Naive thymus-derived CD8-positive, alpha-beta T cell (primary cell): ENCODE measurements at regions of chr1 and their contacts with region 1.

Region 1: GRCh38 chr1:235128456-235129328 is at the start of gene TOMM20:
- DNase-seq: peak; percentile 90 to 97 (median 94)
- ATAC-seq: peak; percentile 89 to 91
- H3K4me3 Mint-ChIP-seq: peak within 1 kb of the TSS; percentile 86 to 98 (median 96)
- H3K27ac Mint-ChIP-seq: peak within 1 kb of the TSS; percentile 95 to 99 (median 98)
- H3K4me1 Mint-ChIP-seq: peaks cover 13 to 48% (median 44%) of the 10 kb centered on the region in 4 donors
- H3K27me3 Mint-ChIP-seq: no peaks in the 10 kb centered on the region
- polyA plus RNA-seq, gene TOMM20: 56.6 to 67.0 (median 60.7) TPM

Region 2: DNA sequence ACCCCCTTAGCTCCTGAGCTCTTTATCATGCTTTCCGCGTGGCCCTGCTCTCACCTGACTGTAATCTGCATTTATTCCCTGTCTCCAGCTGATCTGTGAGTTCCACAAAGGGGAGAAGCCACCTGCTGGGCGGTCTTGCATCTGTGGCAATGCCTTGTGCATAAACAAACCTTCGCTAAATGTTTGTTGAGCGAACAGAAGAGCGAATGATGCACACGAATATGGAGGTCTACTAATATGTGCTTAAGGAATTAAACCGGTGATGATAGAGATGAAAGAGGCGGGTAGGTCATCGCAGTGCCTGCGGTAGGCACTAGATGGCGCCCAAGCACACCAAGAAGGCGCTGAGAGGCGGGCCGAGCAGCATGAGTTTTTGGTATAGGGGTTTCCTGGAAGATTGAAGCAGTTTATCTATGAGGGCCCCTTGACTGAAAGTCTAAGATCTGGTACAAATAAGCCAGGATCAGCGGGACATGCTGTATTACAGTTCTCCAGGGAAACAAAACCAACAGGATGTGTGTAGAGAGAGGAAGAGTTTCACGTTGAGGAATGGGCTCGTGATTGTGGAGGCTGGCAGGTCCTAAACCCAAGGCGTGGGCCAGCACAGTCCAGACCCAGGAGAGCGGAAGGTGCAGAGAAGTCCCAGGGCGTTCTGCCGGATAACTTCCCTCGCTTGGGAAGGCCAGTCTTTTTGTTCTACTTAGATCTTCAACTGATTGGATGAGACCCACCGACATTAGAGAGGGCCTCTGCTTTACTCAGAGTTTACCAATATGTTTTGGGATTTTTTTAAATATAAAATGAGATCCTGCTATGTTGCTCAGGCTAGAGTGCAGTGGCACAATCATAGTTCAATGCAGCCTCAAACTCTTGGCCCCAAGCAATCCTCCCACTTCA is 34.7 kb before region 1 on chr1:
- POLR2A ChIA-PET with region 1: no interaction called
- DNase-seq: peak; percentile 66 to 86 (median 82)
- ATAC-seq: peak; percentile 98 to 99
- H3K4me3 Mint-ChIP-seq: no peak overlapping the region
- H3K27ac Mint-ChIP-seq: peak overlapping the region in 2 of 10 donors; percentile 57 to 72
- H3K4me1 Mint-ChIP-seq: peaks cover 5 to 9% (median 6%) of the 10 kb centered on the region in 4 donors
- H3K27me3 Mint-ChIP-seq: peaks cover 0 to 11% (median 8%) of the 10 kb centered on the region in 5 donors

Region 3: GRCh38 chr1:235160957-235161684 is 32.4 kb after region 1 on chr1 and contains the start of gene RBM34:
- POLR2A ChIA-PET with region 1: interaction called, 24 read pairs
- DNase-seq: peak; percentile 87 to 95 (median 92)
- ATAC-seq: peak; percentile 88 to 89
- H3K4me3 Mint-ChIP-seq: peak within 1 kb of the TSS in 9 of 10 donors; percentile 86 to 100 (median 98)
- H3K27ac Mint-ChIP-seq: peak within 1 kb of the TSS; percentile 95 to 100 (median 99)
- H3K4me1 Mint-ChIP-seq: peaks cover 6 to 25% (median 18%) of the 10 kb centered on the region in 4 donors
- H3K27me3 Mint-ChIP-seq: no peaks in the 10 kb centered on the region
- polyA plus RNA-seq, gene RBM34: 66.1 to 92.1 (median 70.4) TPM